ENCODE measurements at regions of chr12 and their contacts with region 1.

Region 1: DNA sequence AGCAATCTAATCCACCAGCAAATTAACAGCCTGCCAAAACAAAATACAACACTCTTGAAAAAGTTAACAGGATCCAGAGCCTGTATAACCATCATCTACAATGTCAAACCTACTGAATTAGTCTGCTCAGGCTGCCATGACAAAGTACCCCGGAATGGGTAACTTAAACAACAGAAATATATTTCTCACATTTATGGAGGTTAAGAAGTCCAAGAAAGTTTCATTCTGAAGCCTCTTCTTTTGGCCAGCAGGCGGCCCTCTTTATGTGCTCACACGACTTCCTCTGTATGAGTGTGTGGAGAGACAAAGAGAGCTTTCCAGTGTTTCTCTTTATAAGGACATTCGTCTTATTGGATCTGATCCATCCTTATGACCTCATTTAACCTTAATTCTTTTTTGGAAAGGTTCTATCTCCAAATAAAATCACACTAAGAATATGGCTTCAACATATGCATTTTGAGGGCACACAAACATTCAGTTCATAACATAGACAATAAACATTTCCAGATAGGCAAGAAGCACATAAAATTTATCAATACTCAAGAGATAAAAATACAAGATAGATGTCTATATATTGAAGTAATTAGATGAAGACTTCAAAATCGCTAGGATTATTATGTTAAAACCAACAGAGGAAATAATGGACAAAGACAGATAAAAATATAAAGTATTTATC is 5.9 kb upstream of the RERG start:
- DNase-seq: peak in 1 of 2 donors; percentile 26
- ATAC-seq: peak in 4 of 8 donors; percentile 35 to 63 (median 54)
- H3K4me3 ChIP-seq: no peak overlapping the region
- H3K27ac ChIP-seq: no peak overlapping the region
- H3K4me1 ChIP-seq: peaks cover 0 to 5% (median 0%) of the 10 kb centered on the region in 9 donors
- H3K27me3 ChIP-seq: peaks cover 0 to 41% (median 0%) of the 10 kb centered on the region in 7 donors
- CTCF ChIP-seq: peak; percentile 29 to 69 (median 61)

Region 2: DNA sequence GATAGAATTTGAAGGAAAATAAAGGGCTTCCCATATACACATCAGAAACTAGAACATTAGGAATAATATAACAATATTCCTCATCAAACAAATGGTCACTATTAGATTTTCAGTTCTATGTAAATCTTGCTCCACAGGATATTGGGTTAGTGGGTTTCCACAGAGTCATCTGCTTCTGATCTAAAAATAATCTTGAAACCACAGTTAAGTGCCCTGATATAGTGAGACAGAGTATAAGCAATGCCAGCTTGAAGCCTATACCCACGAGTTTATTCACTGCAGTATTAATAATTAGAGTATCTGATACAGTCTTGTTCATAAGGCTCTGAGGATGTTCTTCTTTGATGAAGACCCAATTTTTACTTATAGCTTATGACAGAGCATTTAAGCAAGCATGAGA is 936.2 kb before region 1 on chr12:
- intact Hi-C with region 1: no loop called
- DNase-seq: no peak
- ATAC-seq: no peak
- H3K4me3 ChIP-seq: no peak overlapping the region
- H3K27ac ChIP-seq: no peak overlapping the region
- H3K4me1 ChIP-seq: no peaks in the 10 kb centered on the region
- H3K27me3 ChIP-seq: no peaks in the 10 kb centered on the region
- CTCF ChIP-seq: no peak

Region 3: GRCh38 chr12:15268927-15269552 is 41.9 kb after region 1 on chr12:
- intact Hi-C with region 1: loop called in 7 of 10 experiments (anchors 1 to 5 kb)
- DNase-seq: peak in 1 of 2 donors; percentile 24
- ATAC-seq: peak in 6 of 8 donors; percentile 28 to 69 (median 56)
- H3K4me3 ChIP-seq: no peak overlapping the region
- H3K27ac ChIP-seq: no peak overlapping the region
- H3K4me1 ChIP-seq: no peaks in the 10 kb centered on the region
- H3K27me3 ChIP-seq: peaks cover 0 to 6% (median 0%) of the 10 kb centered on the region in 7 donors
- CTCF ChIP-seq: peak; percentile 71 to 91 (median 85)

Region 4: GRCh38 chr12:15417691-15418090 is 190.5 kb after region 1 on chr12:
- intact Hi-C with region 1: no loop called
- DNase-seq: no peak
- ATAC-seq: no peak
- H3K4me3 ChIP-seq: no peak overlapping the region
- H3K27ac ChIP-seq: no peak overlapping the region
- H3K4me1 ChIP-seq: no peaks in the 10 kb centered on the region
- H3K27me3 ChIP-seq: peaks cover 0 to 3% (median 0%) of the 10 kb centered on the region in 7 donors
- CTCF ChIP-seq: no peak

Region 5: DNA sequence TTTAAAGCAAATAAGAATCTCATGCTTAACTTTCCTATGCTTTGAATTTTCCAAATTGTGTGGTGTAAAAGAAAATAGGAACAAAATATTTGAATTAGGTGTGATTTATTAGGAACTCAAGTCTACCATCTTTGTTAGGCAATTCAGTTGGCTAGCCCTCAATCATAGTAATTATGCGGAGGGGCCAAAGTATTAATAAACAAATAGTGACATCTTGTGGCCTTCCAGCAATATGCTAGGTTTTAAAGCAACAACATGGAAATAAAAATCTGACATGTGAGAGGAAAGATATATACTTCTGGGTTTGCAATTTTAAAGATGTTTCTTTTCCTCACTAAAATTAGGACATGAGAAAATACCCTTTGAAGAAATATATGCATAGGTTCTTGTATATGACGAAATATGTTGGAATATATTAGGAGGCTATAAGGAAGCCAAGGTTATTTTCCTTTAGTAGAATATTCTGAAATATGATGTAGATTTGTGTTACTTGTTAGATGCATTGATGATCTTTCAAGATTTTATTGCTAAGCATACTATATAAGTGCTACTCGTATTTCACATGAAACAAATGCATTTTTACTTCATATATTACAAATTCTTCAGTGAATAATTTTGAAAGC is 295.5 kb after region 1 on chr12:
- intact Hi-C with region 1: loop called in 1 of 10 experiments (anchors 5 kb)
- DNase-seq: no peak
- ATAC-seq: peak in 1 of 8 donors; percentile 62
- H3K4me3 ChIP-seq: no peak overlapping the region
- H3K27ac ChIP-seq: no peak overlapping the region
- H3K4me1 ChIP-seq: no peaks in the 10 kb centered on the region
- H3K27me3 ChIP-seq: peaks cover 0 to 57% (median 21%) of the 10 kb centered on the region in 7 donors
- CTCF ChIP-seq: peak in 8 of 9 donors; percentile 23 to 70 (median 62)